ENCODE measurements at regions of chr11 and their contacts with region 1.

Region 1: DNA sequence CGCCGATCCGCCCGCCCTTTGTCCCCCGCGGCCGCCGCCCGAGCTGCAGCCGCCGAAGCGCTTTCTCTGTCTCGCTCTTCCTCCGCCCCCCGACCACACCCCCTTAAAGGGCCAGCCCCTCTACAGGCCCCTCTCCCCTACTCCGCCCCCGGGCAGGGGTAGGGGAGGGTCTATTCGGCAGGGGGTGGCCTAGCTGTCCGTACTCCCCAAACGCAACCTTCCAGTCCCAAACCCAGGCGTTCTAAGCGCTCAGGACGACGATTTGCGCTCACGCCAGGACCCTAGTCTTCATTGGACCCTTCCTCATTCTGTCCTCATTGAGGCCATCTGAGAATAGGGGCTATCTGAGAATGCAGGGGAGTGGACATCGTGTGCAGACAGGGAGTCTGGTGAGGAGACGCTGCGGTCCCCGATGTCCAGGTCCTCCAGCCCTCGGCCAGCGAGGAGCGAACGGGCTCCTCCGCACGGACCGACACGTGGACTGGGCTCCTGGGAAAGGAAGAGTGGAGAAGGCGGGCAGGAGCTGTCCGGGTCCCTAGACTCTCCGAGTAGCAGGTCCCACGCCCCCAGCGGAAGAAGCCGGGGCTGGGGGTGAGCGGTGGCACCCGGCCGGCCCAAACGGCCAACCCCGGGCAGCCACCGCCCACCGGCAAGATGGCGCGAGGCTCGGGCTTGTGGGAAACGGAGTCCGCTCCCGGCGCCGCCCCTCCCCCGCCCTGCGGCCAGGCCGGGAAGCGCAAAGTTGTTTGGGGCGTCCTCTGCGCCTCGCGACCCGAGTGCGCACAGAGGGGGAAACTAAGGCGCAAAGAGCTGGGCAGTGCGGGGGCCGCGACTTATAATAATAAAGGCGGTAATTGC is at the start of gene PPP1R14B:
- DNase-seq: peak in 1 of 2 experiments; percentile 94
- H3K4me3 ChIP-seq: peak within 1 kb of the TSS; percentile 56 to 99 (median 90)
- H3K27ac ChIP-seq: peak within 1 kb of the TSS; percentile 61
- H3K4me1 ChIP-seq: peaks cover 0 to 48% (median 35%) of the 10 kb centered on the region in 4 experiments; a peak in 6 of 7 replicates
- H3K27me3 ChIP-seq: no peaks in the 10 kb centered on the region
- CTCF ChIP-seq: peak in 1 of 3 experiments; percentile 12; a peak in 1 of 4 replicates
- EP300 ChIP-seq: no peak
- POLR2A ChIP-seq: no peak
- RAD21 ChIP-seq: no peak
- total RNA-seq, gene PPP1R14B: 418 and 419 TPM in 2 replicates

Region 2: GRCh38 chr11:63986932-63987513 is 260.1 kb before region 1 on chr11:
- CTCF ChIA-PET with region 1: no interaction called
- POLR2A ChIA-PET with region 1: no interaction called
- DNase-seq: no peak
- H3K4me3 ChIP-seq: peak overlapping the region; percentile 63 to 86 (median 70)
- H3K27ac ChIP-seq: peak overlapping the region; percentile 96; the same call in 1 of the 2 replicates
- H3K4me1 ChIP-seq: peaks cover 0 to 16% (median 9%) of the 10 kb centered on the region in 4 experiments; a peak in 6 of 7 replicates
- H3K27me3 ChIP-seq: no peaks in the 10 kb centered on the region
- CTCF ChIP-seq: no peak
- EP300 ChIP-seq: no peak
- POLR2A ChIP-seq: no peak; a peak in 1 of 3 replicates
- RAD21 ChIP-seq: no peak

Region 3: GRCh38 chr11:64225612-64226506 is 21.2 kb before region 1 on chr11 and contains the starts of genes NUDT22 and TRPT1:
- CTCF ChIA-PET with region 1: interaction called, 30 read pairs
- POLR2A ChIA-PET with region 1: interaction called, 190 read pairs
- DNase-seq: peak in 1 of 2 experiments; percentile 97
- H3K4me3 ChIP-seq: peak within 1 kb of the TSS; percentile 63 to 90 (median 84)
- H3K27ac ChIP-seq: peak within 1 kb of the TSS; percentile 11; the same call in 1 of the 2 replicates
- H3K4me1 ChIP-seq: peaks cover 0 to 23% (median 14%) of the 10 kb centered on the region in 4 experiments; a peak in 6 of 7 replicates
- H3K27me3 ChIP-seq: no peaks in the 10 kb centered on the region
- CTCF ChIP-seq: peak in 1 of 3 experiments; percentile 48; a peak in 1 of 4 replicates
- EP300 ChIP-seq: no peak
- POLR2A ChIP-seq: peak in 1 of 2 experiments; percentile 44; a peak in 2 of 3 replicates
- RAD21 ChIP-seq: no peak; a peak in 2 of 4 replicates
- total RNA-seq, gene NUDT22: 43.4 and 51.5 TPM in 2 replicates
- total RNA-seq, gene TRPT1: 34.5 and 39.7 TPM in 2 replicates

Region 4: DNA sequence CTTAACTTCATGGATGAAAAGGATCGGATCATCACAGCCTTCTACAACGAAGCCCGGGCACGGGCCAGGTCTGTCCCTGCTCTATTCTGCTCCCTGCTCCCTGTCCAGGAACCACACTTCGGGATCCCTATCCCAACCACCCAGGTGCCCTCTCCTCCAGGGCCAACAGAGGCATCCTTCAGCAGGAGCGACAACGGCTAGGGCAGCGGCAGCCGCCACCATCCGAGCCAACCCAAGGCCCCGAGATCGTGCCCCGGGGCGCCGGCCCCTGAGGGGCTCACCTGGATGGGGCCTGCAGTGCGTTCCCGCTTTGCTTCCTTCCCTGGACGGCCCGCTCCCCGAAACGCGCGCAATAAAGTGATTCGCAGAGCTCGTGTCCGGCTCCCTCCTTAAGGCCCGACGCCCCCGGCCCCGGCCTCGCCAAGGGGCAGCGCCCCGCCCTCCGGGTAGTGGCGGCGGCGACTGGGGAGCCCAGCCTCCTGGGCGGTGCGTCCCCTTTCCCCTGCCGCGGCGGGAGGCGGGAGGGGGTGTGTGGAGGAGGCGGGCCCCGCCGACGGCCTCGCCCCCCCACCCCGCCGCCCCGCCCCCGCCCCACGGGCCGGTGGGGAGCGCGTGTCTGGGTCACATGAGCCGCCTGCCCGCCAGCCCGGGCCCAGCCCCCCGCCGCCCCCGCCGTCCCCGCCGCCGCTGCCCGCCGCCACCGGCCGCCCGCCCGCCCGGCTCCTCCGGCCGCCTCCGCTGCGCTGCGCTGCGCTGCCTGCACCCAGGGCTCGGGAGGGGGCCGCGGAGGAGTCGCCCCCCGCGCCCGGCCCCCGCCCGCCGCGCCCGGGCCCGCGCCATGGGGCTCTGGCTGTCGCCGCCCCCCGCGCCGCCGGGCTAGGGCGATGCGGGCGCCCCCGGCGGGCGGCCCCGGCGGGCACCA is 12.9 kb before region 1 on chr11 and contains the start of gene VEGFB:
- CTCF ChIA-PET with region 1: interaction called, 26 read pairs
- POLR2A ChIA-PET with region 1: interaction called, 190 read pairs
- DNase-seq: peak in 1 of 2 experiments; percentile 75
- H3K4me3 ChIP-seq: peak within 1 kb of the TSS; percentile 46 to 70 (median 56)
- H3K27ac ChIP-seq: no peak within 1 kb of the TSS
- H3K4me1 ChIP-seq: peaks cover 0 to 19% (median 6%) of the 10 kb centered on the region in 4 experiments; a peak in 6 of 7 replicates
- H3K27me3 ChIP-seq: peaks cover 0 to 12% (median 6%) of the 10 kb centered on the region in 4 experiments; a peak in 4 of 7 replicates
- CTCF ChIP-seq: no peak
- EP300 ChIP-seq: no peak
- POLR2A ChIP-seq: no peak
- RAD21 ChIP-seq: no peak
- total RNA-seq, gene VEGFB: 46.1 and 49.6 TPM in 2 replicates

Region 5: GRCh38 chr11:64263021-64263946 is 16.2 kb after region 1 on chr11:
- CTCF ChIA-PET with region 1: interaction called, 102 read pairs
- POLR2A ChIA-PET with region 1: interaction called, 352 read pairs
- DNase-seq: no peak
- H3K4me3 ChIP-seq: no peak overlapping the region
- H3K27ac ChIP-seq: 0 out of 2 replicates have a peak overlapping the region, but pooled peaks have one; percentile 4
- H3K4me1 ChIP-seq: peaks cover 0 to 3% (median under 1%) of the 10 kb centered on the region in 4 experiments; a peak in 4 of 7 replicates
- H3K27me3 ChIP-seq: no peaks in the 10 kb centered on the region
- CTCF ChIP-seq: no peak
- EP300 ChIP-seq: no peak
- POLR2A ChIP-seq: no peak
- RAD21 ChIP-seq: no peak; a peak in 1 of 4 replicates

Region 6: DNA sequence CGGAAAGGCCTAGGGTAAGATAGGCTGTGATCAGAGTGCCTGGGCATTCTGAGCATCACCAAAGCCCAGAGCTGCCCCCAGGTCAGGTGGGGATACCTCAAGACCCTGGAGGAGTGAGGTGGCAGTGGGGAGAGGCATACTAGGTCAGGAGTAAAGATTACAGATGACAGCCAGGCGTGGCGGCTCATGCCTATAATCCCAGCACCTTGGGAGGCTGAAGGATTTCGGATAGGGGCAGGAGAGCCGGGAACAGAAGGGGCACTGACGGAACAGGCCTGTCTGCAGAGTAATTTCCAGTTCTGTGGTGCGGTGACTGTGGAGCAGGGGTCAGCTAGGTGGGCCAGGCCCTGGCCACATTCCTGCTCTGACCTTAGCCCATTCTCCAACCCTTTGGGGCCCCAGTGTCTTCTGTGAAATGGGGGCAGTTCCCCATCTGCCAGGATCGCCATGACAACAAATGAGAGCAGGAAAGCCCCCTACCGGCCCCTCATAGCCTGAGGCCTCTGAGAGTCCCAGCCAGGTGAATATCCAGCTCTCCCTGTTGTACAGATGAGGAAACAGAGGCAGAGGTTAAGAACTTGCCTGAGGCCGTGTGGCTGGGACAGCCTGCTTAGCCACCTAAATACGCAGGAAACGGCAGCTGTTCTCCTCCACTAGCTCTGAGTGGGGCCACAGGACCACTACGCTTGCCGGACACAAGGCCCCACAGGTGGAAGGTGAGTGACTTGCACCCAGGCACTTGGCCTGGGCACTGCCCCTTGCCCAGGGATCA is 28.1 kb after region 1 on chr11:
- CTCF ChIA-PET with region 1: interaction called, 102 read pairs
- POLR2A ChIA-PET with region 1: interaction called, 352 read pairs
- DNase-seq: no peak
- H3K4me3 ChIP-seq: no peak overlapping the region
- H3K27ac ChIP-seq: no peak overlapping the region
- H3K4me1 ChIP-seq: peaks cover 0 to 5% (median 2%) of the 10 kb centered on the region in 4 experiments; a peak in 1 of 7 replicates
- H3K27me3 ChIP-seq: no peaks in the 10 kb centered on the region
- CTCF ChIP-seq: no peak
- EP300 ChIP-seq: no peak
- POLR2A ChIP-seq: no peak
- RAD21 ChIP-seq: no peak

Region 7: GRCh38 chr11:64304316-64305072 is 57.4 kb after region 1 on chr11:
- CTCF ChIA-PET with region 1: interaction called, 54 read pairs
- POLR2A ChIA-PET with region 1: interaction called, 17 read pairs
- DNase-seq: peak; percentile 86 to 99
- H3K4me3 ChIP-seq: peak overlapping the region; percentile 48 to 71 (median 58)
- H3K27ac ChIP-seq: peak overlapping the region; percentile 87
- H3K4me1 ChIP-seq: peaks cover 3 to 21% (median 18%) of the 10 kb centered on the region in 4 experiments; a peak in 6 of 7 replicates
- H3K27me3 ChIP-seq: peaks cover 13 to 30% (median 18%) of the 10 kb centered on the region in 4 experiments
- CTCF ChIP-seq: peak in 2 of 3 experiments; percentile 83 to 95; a peak in 3 of 4 replicates
- EP300 ChIP-seq: no peak
- POLR2A ChIP-seq: peak in 1 of 2 experiments; percentile 95; a peak in 2 of 3 replicates
- RAD21 ChIP-seq: peak; percentile 54 to 69

Region 8: GRCh38 chr11:64419818-64420485 is 172.9 kb after region 1 on chr11:
- CTCF ChIA-PET with region 1: no interaction called
- POLR2A ChIA-PET with region 1: no interaction called
- DNase-seq: no peak
- H3K4me3 ChIP-seq: no peak overlapping the region
- H3K27ac ChIP-seq: no peak overlapping the region
- H3K4me1 ChIP-seq: peaks cover 1 to 4% (median 2%) of the 10 kb centered on the region in 4 experiments; a peak in 5 of 7 replicates
- H3K27me3 ChIP-seq: peaks cover 0 to 3% (median under 1%) of the 10 kb centered on the region in 4 experiments; a peak in 3 of 7 replicates
- CTCF ChIP-seq: no peak
- EP300 ChIP-seq: no peak
- POLR2A ChIP-seq: no peak
- RAD21 ChIP-seq: no peak

Measured in H1 (cell line).